Heart right ventricle (tissue), 16 donors: ENCODE measurements at regions of chr17 and their contacts with region 1.

Region 1: GRCh38 chr17:58112970-58113631 is 29.9 kb downstream of the DYNLL2 start:
- DNase-seq: peak; percentile 65 to 77
- ATAC-seq: peak; percentile 73 to 87 (median 81)
- H3K4me3 ChIP-seq: no peak overlapping the region
- H3K27ac ChIP-seq: no peak overlapping the region
- H3K4me1 ChIP-seq: peaks cover 0 to 3% (median 0%) of the 10 kb centered on the region in 9 donors
- H3K27me3 ChIP-seq: peaks cover 0 to 5% (median 0%) of the 10 kb centered on the region in 7 donors
- CTCF ChIP-seq: peak; percentile 86 to 98 (median 94)

Region 2: DNA sequence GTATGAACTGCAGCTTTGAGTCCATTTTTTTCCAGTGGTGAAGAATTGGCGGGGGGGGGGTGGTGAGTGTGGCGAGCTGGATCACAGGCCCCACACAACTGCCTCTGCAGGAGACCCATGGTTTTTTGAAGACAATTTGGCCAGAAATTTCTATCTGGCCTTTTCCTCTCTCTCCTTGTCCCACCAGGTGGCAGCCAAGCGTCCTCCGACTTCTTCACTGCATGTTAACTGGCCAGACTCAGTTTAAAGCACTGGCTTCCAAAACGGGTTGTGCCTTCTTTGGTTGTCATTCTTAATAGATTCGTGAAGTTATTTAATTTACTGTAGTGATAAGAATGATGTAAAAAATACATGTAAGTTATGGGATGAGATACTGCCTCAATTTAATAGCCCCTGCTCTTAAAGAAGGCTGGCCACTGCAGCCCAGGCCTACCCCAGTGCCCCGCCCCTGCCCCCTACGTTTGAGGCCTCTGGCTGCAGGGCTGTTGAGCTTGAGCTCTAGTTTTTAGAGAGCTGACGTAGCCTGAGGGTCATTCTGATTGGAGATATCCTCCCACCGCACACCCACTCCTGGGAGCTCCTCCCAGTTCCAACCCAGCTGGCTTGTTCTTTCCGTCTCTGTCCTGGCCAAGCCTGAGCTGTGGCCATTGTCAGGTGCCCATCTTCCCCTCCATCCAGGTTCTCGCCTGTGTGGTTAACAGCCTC is 991.6 kb before region 1 on chr17:
- intact Hi-C with region 1: loop called in 3 of 10 experiments (anchors 10 kb)
- DNase-seq: peak in 1 of 2 donors; percentile 29
- ATAC-seq: peak in 5 of 8 donors; percentile 40 to 59 (median 52)
- H3K4me3 ChIP-seq: no peak overlapping the region
- H3K27ac ChIP-seq: peak overlapping the region in 1 of 10 donors; percentile 4
- H3K4me1 ChIP-seq: peaks cover 0 to 14% (median 0%) of the 10 kb centered on the region in 9 donors
- H3K27me3 ChIP-seq: no peaks in the 10 kb centered on the region
- CTCF ChIP-seq: peak in 8 of 9 donors; percentile 17 to 60 (median 48)

Region 3: GRCh38 chr17:57130761-57131461 is 982.2 kb before region 1 on chr17:
- intact Hi-C with region 1: loop called in 6 of 10 experiments (anchors 5 to 10 kb)
- DNase-seq: peak; percentile 76 to 88
- ATAC-seq: peak; percentile 91 to 96 (median 94)
- H3K4me3 ChIP-seq: peak overlapping the region in 1 of 10 donors; percentile 11
- H3K27ac ChIP-seq: no peak overlapping the region
- H3K4me1 ChIP-seq: peaks cover 0 to 5% (median 0%) of the 10 kb centered on the region in 9 donors
- H3K27me3 ChIP-seq: no peaks in the 10 kb centered on the region
- CTCF ChIP-seq: peak; percentile 80 to 95 (median 91)

Region 4: GRCh38 chr17:57142925-57143324 is 970.2 kb before region 1 on chr17:
- intact Hi-C with region 1: loop called in 3 of 10 experiments (anchors 10 kb)
- DNase-seq: peak in 1 of 2 donors; percentile 13
- ATAC-seq: peak in 2 of 8 donors; percentile 30 to 42
- H3K4me3 ChIP-seq: no peak overlapping the region
- H3K27ac ChIP-seq: no peak overlapping the region
- H3K4me1 ChIP-seq: peaks cover 0 to 6% (median 0%) of the 10 kb centered on the region in 9 donors
- H3K27me3 ChIP-seq: peaks cover 0 to 3% (median 0%) of the 10 kb centered on the region in 7 donors
- CTCF ChIP-seq: no peak

Region 5: GRCh38 chr17:57849874-57850754 is 263.0 kb before region 1 on chr17 and contains the start of gene MRPS23:
- intact Hi-C with region 1: loop called in 6 of 10 experiments (anchors 5 to 10 kb)
- DNase-seq: peak; percentile 97 to 98
- ATAC-seq: peak; percentile 85 to 94 (median 90)
- H3K4me3 ChIP-seq: peak within 1 kb of the TSS; percentile 53 to 94 (median 87)
- H3K27ac ChIP-seq: peak within 1 kb of the TSS; percentile 86 to 98 (median 90)
- H3K4me1 ChIP-seq: peaks cover 13 to 66% (median 47%) of the 10 kb centered on the region in 9 donors
- H3K27me3 ChIP-seq: no peaks in the 10 kb centered on the region
- CTCF ChIP-seq: peak in 1 of 9 donors; percentile 6
- total RNA-seq, gene MRPS23: 61.2 to 103 (median 75.5) TPM

Region 6: GRCh38 chr17:57855391-57856035 is 257.6 kb before region 1 on chr17:
- intact Hi-C with region 1: loop called (anchors 1 to 10 kb)
- DNase-seq: no peak
- ATAC-seq: no peak
- H3K4me3 ChIP-seq: no peak overlapping the region
- H3K27ac ChIP-seq: peak overlapping the region in 5 of 10 donors; percentile 12 to 91 (median 47)
- H3K4me1 ChIP-seq: peaks cover 10 to 74% (median 33%) of the 10 kb centered on the region in 9 donors
- H3K27me3 ChIP-seq: no peaks in the 10 kb centered on the region
- CTCF ChIP-seq: no peak

Region 7: GRCh38 chr17:58006924-58007780 is 105.9 kb before region 1 on chr17 and contains the start of gene SRSF1:
- intact Hi-C with region 1: loop called in 8 of 10 experiments (anchors 2 to 10 kb)
- DNase-seq: peak; percentile 97 to 98
- ATAC-seq: peak; percentile 95 to 98 (median 97)
- H3K4me3 ChIP-seq: peak within 1 kb of the TSS; percentile 65 to 98 (median 77)
- H3K27ac ChIP-seq: peak within 1 kb of the TSS; percentile 93 to 100 (median 98)
- H3K4me1 ChIP-seq: peaks cover 17 to 49% (median 46%) of the 10 kb centered on the region in 9 donors
- H3K27me3 ChIP-seq: no peaks in the 10 kb centered on the region
- CTCF ChIP-seq: no peak
- total RNA-seq, gene SRSF1: 79.8 to 130 (median 94.7) TPM

Region 8: GRCh38 chr17:58046239-58047094 is 66.6 kb before region 1 on chr17:
- intact Hi-C with region 1: no loop called
- DNase-seq: peak; percentile 21 to 38
- ATAC-seq: peak; percentile 42 to 90 (median 84)
- H3K4me3 ChIP-seq: no peak overlapping the region
- H3K27ac ChIP-seq: peak overlapping the region in 4 of 10 donors; percentile 4 to 53 (median 32)
- H3K4me1 ChIP-seq: peaks cover 0 to 12% (median 0%) of the 10 kb centered on the region in 9 donors
- H3K27me3 ChIP-seq: peaks cover 0 to 16% (median 0%) of the 10 kb centered on the region in 7 donors
- CTCF ChIP-seq: no peak